GM12878 (cell line): ENCODE measurements at regions of chr7 and their contacts with region 1.

Region 1: GRCh38 chr7:5582532-5582935 is 158.9 kb upstream of the TNRC18 start:
- DNase-seq: peak; percentile 72
- ATAC-seq: peak; percentile 70
- H3K4me3 ChIP-seq: no peak overlapping the region
- H3K27ac ChIP-seq: peak overlapping the region; percentile 52; the same call in 1 of the 2 replicates
- H3K4me1 ChIP-seq: peaks cover 26% of the 10 kb centered on the region
- H3K27me3 ChIP-seq: no peaks in the 10 kb centered on the region
- CTCF ChIP-seq: no peak
- EP300 ChIP-seq: peak in 1 of 2 experiments; percentile 62; a peak in 1 of 4 replicates
- POLR2A ChIP-seq: no peak
- RAD21 ChIP-seq: no peak

Region 2: DNA sequence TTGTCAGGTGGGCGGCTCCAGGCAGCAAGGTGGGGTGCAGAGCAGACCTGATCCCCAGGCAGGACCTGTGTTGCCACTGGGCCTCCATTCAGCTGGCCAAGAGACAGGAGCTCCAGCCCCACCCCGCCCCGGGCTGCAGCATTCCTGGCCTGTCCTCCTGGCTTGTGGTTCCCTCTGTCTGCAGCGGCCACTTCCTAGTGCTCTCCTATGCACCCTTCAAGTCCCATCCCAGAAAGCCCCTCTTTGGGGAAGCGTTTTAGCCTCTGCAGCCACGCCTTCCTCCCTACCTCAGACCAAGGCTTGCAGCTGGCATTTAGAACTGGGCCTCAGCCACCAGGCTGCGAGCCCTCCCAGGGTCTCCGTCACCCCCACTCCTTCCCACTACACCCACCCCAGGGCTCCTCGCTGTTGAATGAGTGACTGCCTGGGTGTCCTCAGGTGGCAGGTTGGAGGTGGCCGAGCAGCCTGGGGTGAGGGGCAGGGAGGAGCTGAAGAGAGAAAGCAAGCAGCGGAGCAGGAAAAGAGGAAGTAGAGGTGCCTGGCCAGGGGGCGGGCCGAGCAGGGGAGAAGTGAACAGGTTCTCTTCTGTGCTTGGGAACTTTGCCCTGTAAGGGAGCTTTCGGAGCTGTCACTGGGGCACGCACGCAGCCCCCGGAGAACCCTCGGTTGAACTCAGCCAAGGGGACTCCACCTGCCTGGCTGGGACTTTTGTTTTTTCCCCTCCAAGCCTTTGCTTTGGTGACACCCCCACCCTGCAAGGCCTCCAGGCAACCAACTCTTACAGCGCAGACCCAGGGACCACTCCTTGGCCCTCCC is 49.8 kb before region 1 on chr7:
- CTCF ChIA-PET with region 1: no interaction called
- POLR2A ChIA-PET with region 1: no interaction called
- RAD21 ChIA-PET with region 1: no interaction called
- SMC1A ChIA-PET with region 1: no interaction called
- in situ Hi-C with region 1: no loop called
- intact Hi-C with region 1: no loop called
- DNase-seq: peak; percentile 82
- ATAC-seq: peak; percentile 54
- H3K4me3 ChIP-seq: peak overlapping the region; percentile 82
- H3K27ac ChIP-seq: peak overlapping the region; percentile 99
- H3K4me1 ChIP-seq: peaks cover 18% of the 10 kb centered on the region
- H3K27me3 ChIP-seq: no peaks in the 10 kb centered on the region
- CTCF ChIP-seq: no peak
- EP300 ChIP-seq: peak in 1 of 2 experiments; percentile 50; a peak in 2 of 4 replicates
- POLR2A ChIP-seq: no peak
- RAD21 ChIP-seq: no peak

Region 3: DNA sequence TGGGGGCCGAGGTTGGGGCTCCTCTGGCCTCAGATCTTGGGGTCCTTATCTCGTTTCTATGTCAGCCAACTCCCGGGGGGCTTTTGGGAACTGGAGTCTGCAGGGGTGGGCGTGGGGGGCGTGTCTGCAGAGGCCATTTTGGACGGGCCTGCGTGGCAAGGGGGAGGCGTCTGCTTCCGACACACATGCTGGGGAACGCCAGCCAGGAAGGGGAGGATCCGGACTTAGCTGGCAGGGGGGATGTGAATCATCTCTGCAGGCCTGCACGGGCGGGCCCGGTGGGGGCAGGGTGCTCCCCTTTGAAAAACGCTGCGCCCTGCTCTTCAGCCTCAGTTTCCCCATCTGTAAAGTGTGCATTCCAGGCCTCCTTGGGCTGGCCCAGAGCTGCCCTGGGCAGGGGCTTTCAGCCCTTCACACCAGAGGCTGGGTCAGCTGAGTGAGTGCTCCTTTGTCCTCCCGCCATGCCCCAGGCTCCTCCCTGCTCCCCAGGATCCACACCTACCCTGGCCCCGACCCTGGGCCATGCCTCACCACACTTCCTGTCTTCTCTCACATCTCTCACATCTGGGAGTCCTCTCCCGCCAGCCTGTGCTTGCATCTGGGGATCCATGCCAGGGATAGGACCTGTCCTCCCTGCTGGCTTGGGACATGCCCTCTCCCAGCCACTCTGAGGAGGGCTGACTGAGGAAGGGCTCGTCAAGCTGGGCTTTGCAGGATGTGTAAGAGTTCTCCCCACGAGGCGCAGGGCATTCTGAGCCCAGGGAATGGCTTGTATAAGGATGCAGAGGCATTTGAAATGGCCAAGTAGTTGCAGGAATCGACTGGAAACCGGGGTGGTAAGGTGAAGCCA is 13.7 kb after region 1 on chr7:
- CTCF ChIA-PET with region 1: interaction called, 12 read pairs
- POLR2A ChIA-PET with region 1: interaction called, 3 read pairs
- RAD21 ChIA-PET with region 1: interaction called, 16 read pairs
- SMC1A ChIA-PET with region 1: interaction called, 3 read pairs
- in situ Hi-C with region 1: no loop called
- intact Hi-C with region 1: no loop called
- DNase-seq: no peak
- ATAC-seq: peak; percentile 55
- H3K4me3 ChIP-seq: peak overlapping the region; percentile 99
- H3K27ac ChIP-seq: peak overlapping the region; percentile 79
- H3K4me1 ChIP-seq: peaks cover 37% of the 10 kb centered on the region
- H3K27me3 ChIP-seq: no peaks in the 10 kb centered on the region
- CTCF ChIP-seq: no peak
- EP300 ChIP-seq: no peak
- POLR2A ChIP-seq: peak; percentile 43; the same call in 1 of the 2 replicates
- RAD21 ChIP-seq: no peak

Region 4: DNA sequence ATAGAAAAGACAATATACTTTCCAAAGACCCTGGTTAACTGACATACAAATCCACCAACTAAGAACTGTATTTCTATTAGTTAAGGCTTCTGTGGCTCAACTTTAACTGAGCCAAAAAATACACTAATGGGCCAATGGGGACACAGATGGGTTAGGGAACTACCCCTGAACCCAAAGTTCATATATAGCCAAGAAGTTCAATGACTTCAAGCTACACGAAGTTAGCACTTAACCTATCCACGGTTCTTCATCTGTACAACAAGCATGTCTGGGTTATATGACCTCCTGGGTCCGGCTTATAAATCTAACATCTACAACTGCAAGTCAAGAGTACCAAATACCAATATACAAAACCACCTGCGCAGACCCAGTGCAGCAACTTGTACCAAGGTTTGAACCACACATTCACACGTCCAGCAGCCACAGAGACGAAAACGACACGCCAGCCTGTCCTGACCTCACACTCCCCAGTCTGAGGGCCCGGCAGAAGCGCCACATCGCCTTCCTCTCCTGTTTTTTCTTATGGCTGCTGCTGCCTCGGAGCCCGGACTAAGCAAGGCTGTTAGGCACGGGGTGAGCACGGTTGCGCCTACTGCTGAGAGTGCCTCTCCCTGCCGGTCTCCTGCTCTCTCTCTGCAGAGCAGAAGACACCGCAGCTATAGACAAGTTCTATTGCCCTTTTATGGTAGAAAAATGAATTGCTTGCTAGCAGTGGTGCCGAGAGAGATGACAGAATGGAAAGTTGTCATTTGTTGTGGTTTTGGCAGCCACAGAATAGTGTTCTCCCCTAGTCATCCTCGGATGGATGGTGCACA is 112.6 kb after region 1 on chr7:
- CTCF ChIA-PET with region 1: interaction called, 3 read pairs
- POLR2A ChIA-PET with region 1: interaction called, 11 read pairs
- RAD21 ChIA-PET with region 1: interaction called, 21 read pairs
- SMC1A ChIA-PET with region 1: interaction called, 5 read pairs
- in situ Hi-C with region 1: no loop called
- intact Hi-C with region 1: no loop called
- DNase-seq: peak; percentile 94
- ATAC-seq: peak; percentile 67
- H3K4me3 ChIP-seq: peak overlapping the region; percentile 49
- H3K27ac ChIP-seq: peak overlapping the region; percentile 94
- H3K4me1 ChIP-seq: peaks cover 89% of the 10 kb centered on the region
- H3K27me3 ChIP-seq: no peaks in the 10 kb centered on the region
- CTCF ChIP-seq: no peak
- EP300 ChIP-seq: peak; percentile 79 to 86
- POLR2A ChIP-seq: peak; percentile 97
- RAD21 ChIP-seq: peak; percentile 17; the same call in 1 of the 2 replicates